OCI-LY7 (cell line): ENCODE measurements at regions of chr6 and their contacts with region 1.

Region 1: DNA sequence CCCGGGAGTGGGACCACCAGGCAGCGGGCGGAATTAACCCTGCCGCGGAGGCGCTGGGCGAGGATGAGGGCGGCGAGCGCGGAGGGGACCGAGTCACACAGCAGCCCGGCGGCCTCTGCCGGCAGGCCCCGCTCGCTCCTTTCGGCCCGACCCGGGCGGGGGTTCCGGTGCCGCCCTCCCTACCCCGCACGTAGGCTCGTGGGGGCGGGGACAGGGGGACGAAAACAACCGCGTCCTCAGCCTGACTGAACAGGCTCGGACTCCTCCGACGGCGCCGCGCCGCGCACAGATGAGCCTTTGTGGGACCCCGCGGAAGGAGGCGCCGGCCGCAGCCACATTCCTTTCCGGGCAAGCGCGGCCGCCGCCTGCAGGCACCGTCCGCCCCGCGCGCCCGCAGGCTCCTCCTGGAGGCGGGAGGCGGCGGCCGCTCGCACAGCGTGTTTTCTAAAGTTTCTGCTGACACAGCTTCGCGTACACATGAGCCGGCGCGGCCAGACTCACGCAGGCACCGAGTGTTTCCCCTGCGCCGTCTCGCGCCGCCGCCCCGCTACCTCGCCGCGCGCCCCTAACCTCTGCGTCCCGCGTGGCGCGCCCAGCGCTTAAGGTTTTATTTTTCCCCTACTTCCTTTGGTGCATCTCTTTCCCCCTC is 244.3 kb downstream of the ARID1B start:
- DNase-seq: peak; percentile 93
- H3K4me3 ChIP-seq: peak overlapping the region; percentile 73
- H3K27ac ChIP-seq: peak overlapping the region; percentile 89
- H3K4me1 ChIP-seq: peaks cover 38% of the 10 kb centered on the region
- CTCF ChIP-seq: peak; percentile 38

Region 2: GRCh38 chr6:156686995-156687788 is 334.3 kb before region 1 on chr6:
- CTCF ChIA-PET with region 1: no interaction called
- POLR2A ChIA-PET with region 1: no interaction called
- intact Hi-C with region 1: loop called (anchors 1 kb)
- DNase-seq: peak; percentile 89
- H3K4me3 ChIP-seq: peak overlapping the region; percentile 73
- H3K27ac ChIP-seq: peak overlapping the region; percentile 92
- H3K4me1 ChIP-seq: peaks cover 57% of the 10 kb centered on the region
- CTCF ChIP-seq: no peak

Region 3: GRCh38 chr6:156852132-156852857 is 169.2 kb before region 1 on chr6:
- CTCF ChIA-PET with region 1: no interaction called
- POLR2A ChIA-PET with region 1: interaction called, 4 read pairs
- intact Hi-C with region 1: loop called (anchors 2 kb)
- DNase-seq: peak; percentile 90
- H3K4me3 ChIP-seq: peak overlapping the region; percentile 43
- H3K27ac ChIP-seq: peak overlapping the region; percentile 67
- H3K4me1 ChIP-seq: peaks cover 83% of the 10 kb centered on the region
- CTCF ChIP-seq: no peak

Region 4: GRCh38 chr6:156976216-156977127 is 45.0 kb before region 1 on chr6:
- CTCF ChIA-PET with region 1: no interaction called
- POLR2A ChIA-PET with region 1: interaction called, 4 read pairs
- intact Hi-C with region 1: loop called (anchors 1 kb)
- DNase-seq: peak; percentile 86
- H3K4me3 ChIP-seq: peak overlapping the region; percentile 66
- H3K27ac ChIP-seq: peak overlapping the region; percentile 88
- H3K4me1 ChIP-seq: peaks cover 86% of the 10 kb centered on the region
- CTCF ChIP-seq: no peak

Region 5: GRCh38 chr6:156988276-156989158 is 33.0 kb before region 1 on chr6:
- CTCF ChIA-PET with region 1: no interaction called
- POLR2A ChIA-PET with region 1: interaction called, 11 read pairs
- intact Hi-C with region 1: no loop called
- DNase-seq: peak; percentile 94
- H3K4me3 ChIP-seq: peak overlapping the region; percentile 64
- H3K27ac ChIP-seq: peak overlapping the region; percentile 99
- H3K4me1 ChIP-seq: peaks cover 89% of the 10 kb centered on the region
- CTCF ChIP-seq: no peak

Region 6: DNA sequence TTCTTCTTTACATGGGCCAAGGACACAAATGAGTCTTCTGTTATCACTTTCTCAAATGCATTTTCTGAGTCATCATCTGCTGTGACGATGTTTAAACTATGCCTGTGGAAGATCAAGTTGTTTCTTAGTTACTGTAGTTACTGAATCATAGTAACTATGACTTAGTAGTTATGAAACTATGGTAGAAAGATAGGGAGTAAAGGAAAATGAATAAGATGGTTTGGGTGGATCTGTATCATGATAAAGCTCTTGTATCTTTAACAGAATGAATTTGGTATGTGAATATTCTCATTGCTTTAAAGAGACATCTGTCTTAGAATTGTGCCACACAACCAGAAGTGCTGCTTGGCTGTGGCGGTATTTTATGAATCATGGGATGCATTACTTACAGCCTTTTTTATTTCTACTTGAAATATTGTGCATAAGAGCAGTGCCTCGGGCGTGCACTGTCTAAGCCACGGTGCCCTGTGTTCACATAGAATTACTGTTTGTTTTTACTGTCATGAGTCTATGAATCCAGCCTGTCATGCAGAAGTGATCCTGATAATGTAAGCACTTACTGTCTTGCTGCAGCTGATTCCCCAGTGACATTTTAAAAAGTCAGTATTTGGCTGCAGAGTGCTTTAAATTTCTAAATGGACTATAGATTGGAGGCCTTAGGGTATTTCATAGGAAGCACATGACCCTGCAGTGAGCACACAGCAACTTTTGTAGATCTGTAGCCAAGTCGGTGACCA is 86.6 kb after region 1 on chr6:
- CTCF ChIA-PET with region 1: no interaction called
- POLR2A ChIA-PET with region 1: no interaction called
- intact Hi-C with region 1: no loop called
- DNase-seq: no peak
- H3K4me3 ChIP-seq: no peak overlapping the region
- H3K27ac ChIP-seq: no peak overlapping the region
- H3K4me1 ChIP-seq: peaks cover 5% of the 10 kb centered on the region
- CTCF ChIP-seq: no peak

Region 7: DNA sequence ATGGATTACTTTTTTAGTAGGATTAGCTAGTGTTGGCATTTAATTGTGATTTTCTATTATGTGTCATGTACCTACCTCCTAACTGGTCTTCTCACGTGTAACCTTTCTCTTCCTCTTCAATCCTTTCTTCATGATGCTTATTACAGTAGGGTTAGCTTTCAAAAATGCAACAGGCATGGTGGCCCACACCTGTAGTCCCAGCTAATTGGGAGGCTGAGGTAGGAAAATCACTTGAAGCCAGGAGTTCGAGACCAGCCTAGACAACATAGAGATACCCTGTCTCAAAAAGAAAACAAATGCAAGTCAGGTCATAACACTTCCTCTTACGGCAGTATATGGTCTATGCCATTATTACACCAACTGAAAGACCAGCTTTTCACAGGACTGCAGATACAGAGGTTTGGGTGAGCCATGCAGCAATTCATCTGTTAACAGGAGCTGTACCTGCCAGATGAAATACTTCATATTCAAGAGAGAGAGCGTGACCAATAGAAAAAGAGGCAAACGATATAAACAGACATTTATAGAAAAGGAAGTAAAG is 106.8 kb after region 1 on chr6:
- CTCF ChIA-PET with region 1: no interaction called
- POLR2A ChIA-PET with region 1: interaction called, 13 read pairs
- intact Hi-C with region 1: no loop called
- DNase-seq: no peak
- H3K4me3 ChIP-seq: no peak overlapping the region
- H3K27ac ChIP-seq: no peak overlapping the region
- H3K4me1 ChIP-seq: no peaks in the 10 kb centered on the region
- CTCF ChIP-seq: no peak